Activated CD8-positive, alpha-beta memory T cell treated with anti-CD3 and anti-CD28 coated beads, Interleukin-2, amount 10 ng/mL, durations not matched to agents 7 days and 5 days (primary cell): ENCODE measurements at regions of chr12 and their contacts with region 1.

Region 1: DNA sequence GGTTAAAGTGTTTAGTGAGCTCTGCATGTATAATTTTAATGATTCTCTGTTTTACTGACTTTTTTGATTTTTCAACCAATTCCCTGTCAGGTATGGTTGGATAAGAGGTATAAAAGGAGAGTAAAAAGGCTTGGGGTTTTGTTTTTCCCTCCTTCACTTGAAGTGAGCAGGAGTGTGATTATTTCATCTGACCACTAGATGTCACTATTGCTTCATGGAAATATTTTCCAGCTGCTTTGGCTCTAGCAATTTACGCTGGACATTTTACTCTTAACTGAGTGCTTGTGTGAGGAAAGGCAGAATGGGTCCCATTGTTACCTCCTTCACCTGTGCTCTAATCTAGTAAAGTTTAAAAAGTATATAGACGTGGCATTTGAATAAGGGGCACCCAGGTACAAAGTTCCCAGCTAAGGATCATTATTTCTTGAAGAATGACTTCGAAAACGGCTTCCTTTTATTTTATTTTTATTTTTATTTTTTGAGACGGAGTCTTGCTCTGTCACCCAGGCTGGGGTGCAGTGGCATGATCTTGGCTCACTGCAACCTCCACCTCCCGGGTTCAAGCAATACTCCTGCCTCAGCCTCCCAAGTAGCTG is 66.5 kb downstream of the TBC1D30 start:
- DNase-seq: no peak
- ATAC-seq: no peak
- H3K4me3 Mint-ChIP-seq: no peak overlapping the region
- H3K27ac Mint-ChIP-seq: no peak overlapping the region
- H3K4me1 Mint-ChIP-seq: peaks cover 2% of the 10 kb centered on the region
- H3K27me3 Mint-ChIP-seq: peaks cover 32% of the 10 kb centered on the region

Region 2: DNA sequence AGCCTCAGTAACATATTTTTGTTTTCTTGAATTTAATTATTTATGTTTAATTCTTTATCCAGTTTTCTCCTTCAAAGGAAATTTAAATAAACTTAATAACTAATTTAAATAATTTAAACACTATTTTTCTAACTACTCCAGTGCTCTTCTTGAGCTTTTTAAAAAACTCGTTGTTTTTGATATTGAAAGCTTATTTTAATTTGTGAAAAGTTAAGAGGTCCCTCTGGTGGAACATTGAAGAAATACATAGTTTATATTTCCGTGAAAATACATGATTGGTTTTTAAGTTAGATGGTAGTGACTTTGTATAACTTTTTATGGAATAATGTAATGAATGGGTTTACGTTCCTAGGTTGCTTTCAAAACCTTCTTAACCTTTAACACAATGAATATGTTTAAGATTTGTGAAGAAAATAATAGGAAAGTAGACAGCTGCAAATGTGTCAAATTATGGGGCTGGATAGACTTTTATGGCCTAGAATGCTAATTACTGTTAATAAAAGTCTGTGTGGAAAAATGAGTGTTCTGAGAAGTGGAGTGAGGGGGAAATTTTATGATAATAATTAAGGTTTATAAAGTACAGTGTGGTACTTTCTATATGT is 341.6 kb after region 1 on chr12:
- CTCF ChIA-PET with region 1: interaction called, 23 read pairs
- DNase-seq: no peak
- ATAC-seq: no peak
- H3K4me3 Mint-ChIP-seq: no peak overlapping the region
- H3K27ac Mint-ChIP-seq: no peak overlapping the region
- H3K4me1 Mint-ChIP-seq: peaks cover 7% of the 10 kb centered on the region
- H3K27me3 Mint-ChIP-seq: no peaks in the 10 kb centered on the region